ENCODE measurements at regions of chr9 and their contacts with region 1.

Region 1: GRCh38 chr9:121326130-121326838 is 43.8 kb downstream of the STOM start:
- DNase-seq: peak; percentile 74
- ATAC-seq: peak; percentile 70 to 80
- H3K4me3 ChIP-seq: no peak overlapping the region
- H3K27ac ChIP-seq: peak overlapping the region; percentile 86
- H3K4me1 ChIP-seq: peaks cover 65% of the 10 kb centered on the region
- H3K27me3 ChIP-seq: no peaks in the 10 kb centered on the region
- CTCF ChIP-seq: no peak

Region 2: GRCh38 chr9:121267689-121268597 is 58.3 kb before region 1 on chr9 and contains the start of gene GSN:
- intact Hi-C with region 1: no loop called
- DNase-seq: peak; percentile 87
- ATAC-seq: peak; percentile 94 to 95
- H3K4me3 ChIP-seq: peak within 1 kb of the TSS; percentile 80
- H3K27ac ChIP-seq: peak within 1 kb of the TSS; percentile 81
- H3K4me1 ChIP-seq: peaks cover 53% of the 10 kb centered on the region
- H3K27me3 ChIP-seq: no peaks in the 10 kb centered on the region
- CTCF ChIP-seq: peak; percentile 28
- total RNA-seq, gene GSN: 388 TPM

Region 3: DNA sequence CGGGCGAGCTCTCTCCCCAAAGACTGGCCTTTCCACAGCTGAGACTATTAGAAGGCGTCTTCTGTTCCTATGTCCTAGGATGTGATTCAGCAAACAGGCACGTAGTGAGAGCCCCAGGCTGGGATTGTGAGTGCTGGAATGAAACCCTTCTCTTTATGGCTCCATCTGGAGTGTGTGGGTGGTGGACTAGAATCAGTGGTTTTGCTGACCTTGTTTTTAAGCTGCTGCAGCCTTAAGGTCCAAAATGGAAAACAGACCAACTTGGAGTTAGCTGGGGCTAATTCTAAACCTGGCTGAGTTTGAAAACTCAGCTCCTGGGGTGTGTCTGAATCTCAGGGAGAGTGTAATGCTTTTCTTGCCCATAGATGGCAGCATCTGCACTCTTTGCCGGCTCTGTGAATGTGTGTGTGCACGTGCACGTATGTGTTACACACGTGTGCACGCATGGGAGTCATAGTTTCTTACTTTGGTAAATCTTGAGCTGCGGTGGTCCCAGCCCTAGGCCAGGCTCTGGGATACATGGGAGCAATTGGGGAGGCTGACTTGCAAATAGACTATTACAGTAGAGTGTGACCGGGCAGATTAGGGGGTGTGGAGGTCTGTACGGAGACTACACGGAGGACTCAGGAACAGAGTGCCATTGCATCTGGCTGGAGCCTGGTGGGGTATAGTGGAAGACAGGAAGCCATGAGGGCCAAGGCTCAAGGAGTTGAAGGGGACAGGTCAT is 47.6 kb before region 1 on chr9:
- intact Hi-C with region 1: no loop called
- DNase-seq: peak; percentile 72
- ATAC-seq: peak; percentile 45 to 62
- H3K4me3 ChIP-seq: no peak overlapping the region
- H3K27ac ChIP-seq: peak overlapping the region; percentile 77
- H3K4me1 ChIP-seq: peaks cover 67% of the 10 kb centered on the region
- H3K27me3 ChIP-seq: no peaks in the 10 kb centered on the region
- CTCF ChIP-seq: peak; percentile 82

Region 4: GRCh38 chr9:121369595-121370265 is 43.4 kb after region 1 on chr9 and contains the start of gene STOM:
- intact Hi-C with region 1: loop called (anchors 10 kb)
- DNase-seq: peak; percentile 88
- ATAC-seq: peak; percentile 72 to 82
- H3K4me3 ChIP-seq: peak within 1 kb of the TSS; percentile 84
- H3K27ac ChIP-seq: peak within 1 kb of the TSS; percentile 93
- H3K4me1 ChIP-seq: peaks cover 83% of the 10 kb centered on the region
- H3K27me3 ChIP-seq: no peaks in the 10 kb centered on the region
- CTCF ChIP-seq: no peak
- total RNA-seq, gene STOM: 479 TPM